CD8-positive, alpha-beta T cell (primary cell): ENCODE measurements at regions of chr14 and their contacts with region 1.

Region 1: DNA sequence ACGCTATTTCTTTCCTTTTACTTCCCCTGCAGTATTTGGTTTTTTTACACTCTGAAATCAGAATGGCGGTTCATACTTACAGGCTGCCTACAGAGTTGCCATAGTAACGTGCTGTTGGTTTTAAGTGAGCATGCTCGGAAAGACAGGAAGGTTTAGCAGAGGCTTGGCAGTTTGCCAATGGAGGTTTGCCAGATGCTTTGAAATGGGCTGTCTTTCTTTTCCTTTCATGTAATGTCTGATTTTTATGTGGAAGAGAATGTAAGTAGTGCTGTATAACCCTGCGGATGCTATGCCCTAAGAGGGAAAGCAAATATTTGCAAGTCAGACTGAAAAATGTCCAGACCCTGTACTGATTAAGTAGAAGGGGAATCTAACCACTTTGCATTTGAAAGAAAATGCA is 32.8 kb downstream of the ARID4A start:
- DNase-seq: peak; percentile 78 to 99 (median 92)
- ATAC-seq: peak; percentile 97
- H3K4me3 ChIP-seq: no peak overlapping the region
- H3K4me3 Mint-ChIP-seq: peak overlapping the region; percentile 30
- H3K27ac ChIP-seq: peak overlapping the region; percentile 51 to 63
- H3K27ac Mint-ChIP-seq: peak overlapping the region; percentile 89
- H3K4me1 ChIP-seq: peaks cover 10% of the 10 kb centered on the region
- H3K4me1 Mint-ChIP-seq: peaks cover 24% of the 10 kb centered on the region
- H3K27me3 ChIP-seq: no peaks in the 10 kb centered on the region
- H3K27me3 Mint-ChIP-seq: no peaks in the 10 kb centered on the region
- CTCF ChIP-seq: no peak

Region 2: DNA sequence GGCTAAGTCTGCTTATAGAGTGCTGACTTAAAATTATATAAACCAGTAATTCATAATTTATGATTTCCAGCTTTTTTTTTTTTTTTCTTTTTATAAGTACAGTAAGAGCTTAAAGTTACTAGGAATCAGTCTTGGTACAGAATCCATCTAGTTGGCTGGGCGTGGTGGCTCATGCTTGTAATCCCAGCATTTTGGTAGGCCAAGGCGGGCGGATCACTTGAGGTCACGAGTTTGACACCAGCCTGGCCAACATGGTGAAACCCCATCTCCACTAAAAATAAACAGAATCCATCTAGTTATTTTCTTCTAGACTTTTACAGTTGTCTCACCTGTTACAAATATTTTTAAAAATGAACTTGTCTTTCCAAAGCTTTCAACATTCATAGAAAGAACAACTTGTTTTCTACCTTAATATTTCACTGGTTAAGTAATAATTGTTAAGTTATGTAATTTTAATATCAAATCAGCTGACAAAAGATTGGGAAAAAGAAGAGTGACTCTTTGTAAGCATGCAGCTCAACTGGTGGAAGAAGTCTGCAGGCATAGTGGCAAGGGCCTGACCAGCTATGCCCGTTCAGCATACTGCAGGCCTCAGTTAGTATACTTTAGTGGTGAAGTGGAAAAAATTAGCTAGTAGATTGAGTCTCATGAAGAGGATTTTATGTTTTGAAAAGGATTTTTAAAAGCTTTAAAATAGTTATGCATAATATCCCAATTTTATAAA is 103.9 kb before region 1 on chr14:
- CTCF ChIA-PET with region 1: no interaction called
- POLR2A ChIA-PET with region 1: no interaction called
- intact Hi-C with region 1: no loop called
- DNase-seq: no peak
- ATAC-seq: no peak
- H3K4me3 ChIP-seq: no peak overlapping the region
- H3K4me3 Mint-ChIP-seq: no peak overlapping the region
- H3K27ac ChIP-seq: no peak overlapping the region
- H3K27ac Mint-ChIP-seq: no peak overlapping the region
- H3K4me1 ChIP-seq: no peaks in the 10 kb centered on the region
- H3K4me1 Mint-ChIP-seq: no peaks in the 10 kb centered on the region
- H3K27me3 ChIP-seq: no peaks in the 10 kb centered on the region
- H3K27me3 Mint-ChIP-seq: no peaks in the 10 kb centered on the region
- CTCF ChIP-seq: no peak

Region 3: GRCh38 chr14:58239244-58240195 is 91.6 kb before region 1 on chr14:
- CTCF ChIA-PET with region 1: no interaction called
- POLR2A ChIA-PET with region 1: no interaction called
- intact Hi-C with region 1: loop called (anchors 1 to 2 kb)
- DNase-seq: peak; percentile 63 to 91 (median 83)
- ATAC-seq: peak; percentile 24
- H3K4me3 ChIP-seq: peak overlapping the region; percentile 57 to 81
- H3K4me3 Mint-ChIP-seq: no peak overlapping the region
- H3K27ac ChIP-seq: peak overlapping the region; percentile 59 to 77
- H3K27ac Mint-ChIP-seq: no peak overlapping the region
- H3K4me1 ChIP-seq: peaks cover 10% of the 10 kb centered on the region
- H3K4me1 Mint-ChIP-seq: peaks cover 22% of the 10 kb centered on the region
- H3K27me3 ChIP-seq: no peaks in the 10 kb centered on the region
- H3K27me3 Mint-ChIP-seq: no peaks in the 10 kb centered on the region
- CTCF ChIP-seq: no peak

Region 4: GRCh38 chr14:58244556-58245387 is 86.3 kb before region 1 on chr14 and contains the start of gene PSMA3:
- CTCF ChIA-PET with region 1: no interaction called
- POLR2A ChIA-PET with region 1: no interaction called
- intact Hi-C with region 1: loop called (anchors 1 to 2 kb)
- DNase-seq: peak; percentile 94 to 98 (median 98)
- ATAC-seq: peak; percentile 83
- H3K4me3 ChIP-seq: peak within 1 kb of the TSS; percentile 92 to 93
- H3K4me3 Mint-ChIP-seq: peak within 1 kb of the TSS; percentile 99
- H3K27ac ChIP-seq: peak within 1 kb of the TSS; percentile 91 to 96
- H3K27ac Mint-ChIP-seq: peak within 1 kb of the TSS; percentile 98
- H3K4me1 ChIP-seq: peaks cover 30% of the 10 kb centered on the region
- H3K4me1 Mint-ChIP-seq: peaks cover 49% of the 10 kb centered on the region
- H3K27me3 ChIP-seq: no peaks in the 10 kb centered on the region
- H3K27me3 Mint-ChIP-seq: no peaks in the 10 kb centered on the region
- CTCF ChIP-seq: no peak
- total RNA-seq, gene PSMA3: 105 to 106 TPM

Region 5: GRCh38 chr14:58362798-58363412 is 31.8 kb after region 1 on chr14:
- CTCF ChIA-PET with region 1: no interaction called
- POLR2A ChIA-PET with region 1: no interaction called
- intact Hi-C with region 1: loop called in 1 of 2 experiments (anchors 5 kb)
- DNase-seq: peak in 2 of 9 experiments; percentile 43 to 58
- ATAC-seq: peak; percentile 62
- H3K4me3 ChIP-seq: no peak overlapping the region
- H3K4me3 Mint-ChIP-seq: no peak overlapping the region
- H3K27ac ChIP-seq: no peak overlapping the region
- H3K27ac Mint-ChIP-seq: no peak overlapping the region
- H3K4me1 ChIP-seq: no peaks in the 10 kb centered on the region
- H3K4me1 Mint-ChIP-seq: no peaks in the 10 kb centered on the region
- H3K27me3 ChIP-seq: no peaks in the 10 kb centered on the region
- H3K27me3 Mint-ChIP-seq: no peaks in the 10 kb centered on the region
- CTCF ChIP-seq: no peak

Region 6: GRCh38 chr14:58395812-58396788 is 65.0 kb after region 1 on chr14 and contains the start of gene TOMM20L:
- CTCF ChIA-PET with region 1: interaction called, 3 read pairs
- POLR2A ChIA-PET with region 1: no interaction called
- intact Hi-C with region 1: loop called in 1 of 2 experiments (anchors 1 kb)
- DNase-seq: peak; percentile 48 to 86 (median 69)
- ATAC-seq: peak; percentile 81
- H3K4me3 ChIP-seq: peak within 1 kb of the TSS; percentile 27 to 59
- H3K4me3 Mint-ChIP-seq: peak within 1 kb of the TSS; percentile 84
- H3K27ac ChIP-seq: peak within 1 kb of the TSS; percentile 69 to 75
- H3K27ac Mint-ChIP-seq: peak within 1 kb of the TSS; percentile 93
- H3K4me1 ChIP-seq: peaks cover 9% of the 10 kb centered on the region
- H3K4me1 Mint-ChIP-seq: peaks cover 13% of the 10 kb centered on the region
- H3K27me3 ChIP-seq: no peaks in the 10 kb centered on the region
- H3K27me3 Mint-ChIP-seq: no peaks in the 10 kb centered on the region
- CTCF ChIP-seq: peak; percentile 94
- total RNA-seq, gene TOMM20L: 0.92 TPM in 1 of 2 experiments, not detected in the other

Region 7: DNA sequence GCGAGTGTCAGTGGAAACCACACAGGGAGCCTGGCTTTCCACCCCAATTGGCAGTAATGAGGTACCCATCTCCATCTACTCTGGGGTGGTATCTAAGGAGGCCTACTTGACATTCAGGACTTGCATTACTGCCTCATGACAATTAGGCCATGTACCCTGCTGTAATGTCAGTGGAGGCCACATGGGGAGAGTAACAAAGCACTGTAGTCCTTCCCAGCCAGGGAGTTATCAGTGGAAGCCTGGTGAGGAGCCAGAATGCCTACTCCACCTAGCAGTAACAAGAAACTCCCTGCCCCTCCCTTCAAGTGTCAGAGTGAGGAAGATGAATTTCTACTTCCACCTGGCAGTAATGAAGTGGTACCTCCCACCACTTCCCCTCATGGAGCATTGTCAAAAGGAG is 83.7 kb after region 1 on chr14:
- CTCF ChIA-PET with region 1: no interaction called
- POLR2A ChIA-PET with region 1: no interaction called
- intact Hi-C with region 1: no loop called
- DNase-seq: no peak
- ATAC-seq: no peak
- H3K4me3 ChIP-seq: no peak overlapping the region
- H3K4me3 Mint-ChIP-seq: no peak overlapping the region
- H3K27ac ChIP-seq: no peak overlapping the region
- H3K27ac Mint-ChIP-seq: no peak overlapping the region
- H3K4me1 ChIP-seq: no peaks in the 10 kb centered on the region
- H3K4me1 Mint-ChIP-seq: peaks cover 24% of the 10 kb centered on the region
- H3K27me3 ChIP-seq: no peaks in the 10 kb centered on the region
- H3K27me3 Mint-ChIP-seq: no peaks in the 10 kb centered on the region
- CTCF ChIP-seq: no peak